ENCODE measurements at regions of chr13 and their contacts with region 1.

Region 1: DNA sequence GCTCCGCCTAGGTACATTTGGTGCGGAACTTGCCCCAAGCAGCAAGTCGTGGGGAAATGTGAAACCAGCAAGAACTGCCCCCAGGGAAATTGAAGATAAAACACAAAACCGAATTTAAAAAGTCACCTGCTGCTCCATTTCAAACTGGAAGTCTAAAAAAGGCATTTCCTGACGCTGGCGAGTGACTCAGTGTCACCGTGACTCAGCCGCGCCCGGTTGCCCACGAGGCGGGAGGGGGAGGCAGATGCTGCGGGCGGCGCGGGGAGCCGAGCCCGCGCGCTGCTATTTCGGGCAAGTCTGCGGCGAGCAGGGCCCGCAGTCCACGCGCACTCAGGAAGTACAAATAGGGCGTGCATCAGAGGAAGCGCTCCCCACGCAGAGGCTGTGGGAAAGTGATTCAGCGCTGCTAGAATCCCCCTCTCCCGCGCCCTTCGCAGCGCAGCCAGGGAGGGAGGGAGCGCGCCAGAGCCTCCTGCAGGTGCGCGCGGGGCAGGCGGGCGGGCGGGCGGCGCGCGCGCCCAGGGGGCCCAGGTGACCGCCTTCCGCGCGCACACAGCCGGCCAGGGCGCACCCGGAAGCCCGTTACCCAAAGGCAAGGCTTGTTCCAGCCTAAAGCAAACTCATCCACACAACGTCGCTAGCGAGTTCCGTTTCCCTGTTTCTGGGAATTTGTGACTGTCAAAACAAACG is 168.8 kb downstream of the COL4A1 start:
- DNase-seq: peak; percentile 86
- H3K4me3 ChIP-seq: peak overlapping the region; percentile 61
- H3K4me3 Mint-ChIP-seq: peak overlapping the region; percentile 92
- H3K27ac Mint-ChIP-seq: peak overlapping the region; percentile 82
- H3K4me1 ChIP-seq: peaks cover 5% of the 10 kb centered on the region
- H3K4me1 Mint-ChIP-seq: no peaks in the 10 kb centered on the region
- H3K27me3 ChIP-seq: no peaks in the 10 kb centered on the region
- H3K27me3 Mint-ChIP-seq: peaks cover 3% of the 10 kb centered on the region
- CTCF ChIP-seq: peak in 1 of 2 experiments; percentile 32

Region 2: GRCh38 chr13:109933476-109933875 is 204.7 kb before region 1 on chr13:
- CTCF ChIA-PET with region 1: no interaction called
- POLR2A ChIA-PET with region 1: no interaction called
- intact Hi-C with region 1: loop called (anchors 1 kb)
- DNase-seq: no peak
- H3K4me3 ChIP-seq: no peak overlapping the region
- H3K4me3 Mint-ChIP-seq: no peak overlapping the region
- H3K27ac Mint-ChIP-seq: no peak overlapping the region
- H3K4me1 ChIP-seq: no peaks in the 10 kb centered on the region
- H3K4me1 Mint-ChIP-seq: no peaks in the 10 kb centered on the region
- H3K27me3 ChIP-seq: no peaks in the 10 kb centered on the region
- H3K27me3 Mint-ChIP-seq: no peaks in the 10 kb centered on the region
- CTCF ChIP-seq: no peak

Region 3: DNA sequence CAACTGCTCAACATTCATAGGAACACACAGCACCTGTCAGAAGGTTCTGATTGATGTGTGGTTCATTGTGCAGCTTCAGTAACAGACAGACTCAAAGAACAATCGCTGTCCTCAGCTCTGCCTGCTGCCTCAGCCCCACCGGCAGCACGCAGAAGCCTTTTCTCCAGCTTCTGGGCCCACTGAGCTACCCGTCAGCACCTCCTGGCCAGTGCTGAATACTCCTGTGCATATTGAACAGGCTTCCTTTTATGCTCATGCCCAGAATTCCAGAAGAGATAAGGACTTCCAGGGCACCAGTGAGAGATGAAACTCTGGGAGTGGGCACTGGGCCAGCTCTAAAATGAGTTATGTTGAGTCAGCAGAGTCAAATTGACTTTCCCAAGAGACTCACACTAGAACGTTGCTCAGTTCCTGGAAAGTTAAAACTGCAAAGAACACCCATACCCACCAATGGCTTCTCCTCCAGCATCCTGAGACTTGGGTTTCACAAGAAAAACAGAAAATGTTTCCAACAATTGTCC is 49.5 kb after region 1 on chr13:
- CTCF ChIA-PET with region 1: no interaction called
- POLR2A ChIA-PET with region 1: no interaction called
- intact Hi-C with region 1: loop called (anchors 1 kb)
- DNase-seq: no peak
- H3K4me3 ChIP-seq: no peak overlapping the region
- H3K4me3 Mint-ChIP-seq: no peak overlapping the region
- H3K27ac Mint-ChIP-seq: peak overlapping the region; percentile 89
- H3K4me1 ChIP-seq: peaks cover 37% of the 10 kb centered on the region
- H3K4me1 Mint-ChIP-seq: peaks cover 26% of the 10 kb centered on the region
- H3K27me3 ChIP-seq: no peaks in the 10 kb centered on the region
- H3K27me3 Mint-ChIP-seq: no peaks in the 10 kb centered on the region
- CTCF ChIP-seq: no peak

Region 4: DNA sequence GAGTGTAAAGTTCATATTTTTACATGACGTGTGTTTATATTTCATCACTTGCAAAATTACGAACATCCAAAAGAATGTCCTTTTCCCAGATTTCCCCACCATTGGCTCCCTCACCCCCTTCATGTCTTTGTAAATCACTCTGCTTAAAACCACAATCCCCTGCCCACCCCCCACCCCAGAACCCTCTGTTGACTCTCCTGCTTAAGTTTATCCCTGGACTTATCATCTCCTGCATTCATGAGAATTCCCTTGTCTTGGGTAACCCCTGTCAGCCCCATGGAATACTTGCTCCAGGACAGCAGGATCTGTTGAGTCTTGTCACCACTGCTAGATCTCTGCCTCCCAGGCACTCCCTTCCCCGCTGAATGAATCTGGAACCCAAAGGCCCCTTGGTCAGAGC is 58.9 kb after region 1 on chr13:
- CTCF ChIA-PET with region 1: no interaction called
- POLR2A ChIA-PET with region 1: no interaction called
- intact Hi-C with region 1: loop called (anchors 1 kb)
- DNase-seq: peak; percentile 69 to 73
- H3K4me3 ChIP-seq: no peak overlapping the region
- H3K4me3 Mint-ChIP-seq: peak overlapping the region; percentile 3
- H3K27ac Mint-ChIP-seq: peak overlapping the region; percentile 85
- H3K4me1 ChIP-seq: peaks cover 63% of the 10 kb centered on the region
- H3K4me1 Mint-ChIP-seq: peaks cover 72% of the 10 kb centered on the region
- H3K27me3 ChIP-seq: no peaks in the 10 kb centered on the region
- H3K27me3 Mint-ChIP-seq: no peaks in the 10 kb centered on the region
- CTCF ChIP-seq: no peak

Region 5: DNA sequence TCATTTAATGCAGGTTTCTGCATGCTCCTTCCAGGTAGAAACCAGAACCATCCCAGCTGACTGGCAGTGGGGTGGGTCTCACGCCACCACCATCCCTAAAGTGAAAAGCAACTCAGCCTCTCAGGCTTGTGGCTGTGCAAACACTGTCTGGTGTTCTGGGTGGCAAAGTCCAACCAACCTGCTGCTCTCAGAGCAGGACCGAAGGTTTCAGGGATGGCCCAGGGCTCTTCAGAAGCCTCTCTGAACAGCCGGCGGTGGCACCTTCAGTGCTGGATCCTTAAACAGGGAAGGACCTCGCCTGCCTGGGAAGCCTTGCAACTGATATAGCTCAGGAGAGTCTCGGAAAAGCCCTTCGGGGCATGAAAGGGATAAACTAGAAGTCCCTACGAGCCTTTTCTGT is 68.0 kb after region 1 on chr13:
- CTCF ChIA-PET with region 1: no interaction called
- POLR2A ChIA-PET with region 1: no interaction called
- intact Hi-C with region 1: loop called (anchors 2 kb)
- DNase-seq: peak; percentile 77 to 84
- H3K4me3 ChIP-seq: no peak overlapping the region
- H3K4me3 Mint-ChIP-seq: no peak overlapping the region
- H3K27ac Mint-ChIP-seq: peak overlapping the region; percentile 72
- H3K4me1 ChIP-seq: peaks cover 12% of the 10 kb centered on the region
- H3K4me1 Mint-ChIP-seq: peaks cover 2% of the 10 kb centered on the region
- H3K27me3 ChIP-seq: no peaks in the 10 kb centered on the region
- H3K27me3 Mint-ChIP-seq: no peaks in the 10 kb centered on the region
- CTCF ChIP-seq: no peak

Region 6: GRCh38 chr13:110225609-110226562 is 87.7 kb after region 1 on chr13:
- CTCF ChIA-PET with region 1: no interaction called
- POLR2A ChIA-PET with region 1: no interaction called
- intact Hi-C with region 1: loop called (anchors 1 kb)
- DNase-seq: peak in 1 of 2 experiments; percentile 45
- H3K4me3 ChIP-seq: no peak overlapping the region
- H3K4me3 Mint-ChIP-seq: no peak overlapping the region
- H3K27ac Mint-ChIP-seq: peak overlapping the region; percentile 40
- H3K4me1 ChIP-seq: peaks cover 32% of the 10 kb centered on the region
- H3K4me1 Mint-ChIP-seq: peaks cover 22% of the 10 kb centered on the region
- H3K27me3 ChIP-seq: no peaks in the 10 kb centered on the region
- H3K27me3 Mint-ChIP-seq: no peaks in the 10 kb centered on the region
- CTCF ChIP-seq: no peak

Region 7: GRCh38 chr13:110412132-110412914 is 274.2 kb after region 1 on chr13:
- CTCF ChIA-PET with region 1: no interaction called
- POLR2A ChIA-PET with region 1: no interaction called
- intact Hi-C with region 1: loop called (anchors 2 kb)
- DNase-seq: peak; percentile 80 to 88
- H3K4me3 ChIP-seq: no peak overlapping the region
- H3K4me3 Mint-ChIP-seq: no peak overlapping the region
- H3K27ac Mint-ChIP-seq: peak overlapping the region; percentile 83
- H3K4me1 ChIP-seq: peaks cover 13% of the 10 kb centered on the region
- H3K4me1 Mint-ChIP-seq: peaks cover 12% of the 10 kb centered on the region
- H3K27me3 ChIP-seq: no peaks in the 10 kb centered on the region
- H3K27me3 Mint-ChIP-seq: no peaks in the 10 kb centered on the region
- CTCF ChIP-seq: peak; percentile 94

Region 8: GRCh38 chr13:110874508-110874960 is 736.4 kb after region 1 on chr13:
- CTCF ChIA-PET with region 1: no interaction called
- POLR2A ChIA-PET with region 1: no interaction called
- intact Hi-C with region 1: no loop called
- DNase-seq: peak; percentile 81 to 84
- H3K4me3 ChIP-seq: peak overlapping the region; percentile 35
- H3K4me3 Mint-ChIP-seq: no peak overlapping the region
- H3K27ac Mint-ChIP-seq: peak overlapping the region; percentile 55
- H3K4me1 ChIP-seq: peaks cover 22% of the 10 kb centered on the region; the same call in 1 of the 2 replicates
- H3K4me1 Mint-ChIP-seq: peaks cover 5% of the 10 kb centered on the region
- H3K27me3 ChIP-seq: no peaks in the 10 kb centered on the region
- H3K27me3 Mint-ChIP-seq: no peaks in the 10 kb centered on the region
- CTCF ChIP-seq: no peak